CD8-positive, alpha-beta T cell (primary cell): ENCODE measurements at regions of chr12 and their contacts with region 1.

Region 1: DNA sequence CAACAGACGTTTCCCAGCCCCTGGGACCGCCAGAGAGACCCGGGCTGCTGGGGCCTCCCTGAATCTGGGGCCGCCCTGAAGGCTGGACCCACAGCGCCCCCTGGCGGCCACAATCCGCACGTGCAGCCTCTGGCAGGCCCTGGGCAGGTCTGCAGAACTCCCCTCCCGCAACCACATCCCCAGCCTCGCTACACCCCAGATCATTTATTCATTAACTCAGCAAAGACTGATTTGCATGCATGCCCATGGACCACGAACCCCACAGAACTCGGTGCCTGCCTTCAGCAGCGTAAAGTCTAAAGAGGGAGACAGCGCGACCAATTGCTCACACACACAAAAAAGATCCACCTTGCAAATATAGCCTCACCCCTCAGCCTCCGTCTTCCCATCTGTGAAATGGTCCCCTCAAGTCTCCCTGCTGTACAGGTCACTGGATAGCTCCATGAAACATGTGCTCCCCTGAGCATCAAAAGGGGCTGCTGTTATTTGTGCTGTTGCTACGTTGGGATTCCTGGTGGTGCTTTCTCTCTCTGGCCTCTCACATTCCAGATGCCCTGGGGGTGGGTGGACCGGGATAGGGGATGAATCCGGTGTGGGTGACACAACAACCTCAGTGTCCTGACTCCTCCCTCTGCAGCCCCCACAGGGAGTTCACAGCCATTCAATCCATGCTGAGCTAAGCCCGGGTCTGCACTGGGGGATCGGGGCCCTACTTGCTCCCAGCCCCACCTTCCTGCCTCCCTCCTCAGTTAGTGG is 96.4 kb downstream of the SCARB1 start:
- DNase-seq: peak; percentile 72 to 94 (median 83)
- ATAC-seq: peak; percentile 89
- H3K4me3 ChIP-seq: no peak overlapping the region
- H3K4me3 Mint-ChIP-seq: no peak overlapping the region
- H3K27ac ChIP-seq: no peak overlapping the region
- H3K27ac Mint-ChIP-seq: peak overlapping the region; percentile 24
- H3K4me1 ChIP-seq: peaks cover 8% of the 10 kb centered on the region
- H3K4me1 Mint-ChIP-seq: peaks cover 23% of the 10 kb centered on the region
- H3K27me3 ChIP-seq: peaks cover 1 to 3% of the 10 kb centered on the region in 2 experiments
- H3K27me3 Mint-ChIP-seq: peaks cover 4% of the 10 kb centered on the region
- CTCF ChIP-seq: peak; percentile 99

Region 2: GRCh38 chr12:124347716-124348357 is 419.4 kb before region 1 on chr12:
- CTCF ChIA-PET with region 1: interaction called, 20 read pairs
- POLR2A ChIA-PET with region 1: no interaction called
- intact Hi-C with region 1: loop called in 1 of 2 experiments (anchors 1 kb)
- DNase-seq: peak in 7 of 9 experiments; percentile 4 to 59 (median 40)
- ATAC-seq: no peak
- H3K4me3 ChIP-seq: no peak overlapping the region
- H3K4me3 Mint-ChIP-seq: no peak overlapping the region
- H3K27ac ChIP-seq: no peak overlapping the region
- H3K27ac Mint-ChIP-seq: no peak overlapping the region
- H3K4me1 ChIP-seq: no peaks in the 10 kb centered on the region
- H3K4me1 Mint-ChIP-seq: no peaks in the 10 kb centered on the region
- H3K27me3 ChIP-seq: no peaks in the 10 kb centered on the region
- H3K27me3 Mint-ChIP-seq: no peaks in the 10 kb centered on the region
- CTCF ChIP-seq: peak; percentile 58

Region 3: GRCh38 chr12:124379938-124380754 is 387.1 kb before region 1 on chr12:
- CTCF ChIA-PET with region 1: interaction called, 5 read pairs
- POLR2A ChIA-PET with region 1: no interaction called
- intact Hi-C with region 1: loop called in 1 of 2 experiments (anchors 10 kb)
- DNase-seq: no peak
- ATAC-seq: no peak
- H3K4me3 ChIP-seq: no peak overlapping the region
- H3K4me3 Mint-ChIP-seq: no peak overlapping the region
- H3K27ac ChIP-seq: no peak overlapping the region
- H3K27ac Mint-ChIP-seq: peak overlapping the region; percentile 41
- H3K4me1 ChIP-seq: no peaks in the 10 kb centered on the region
- H3K4me1 Mint-ChIP-seq: peaks cover 4% of the 10 kb centered on the region
- H3K27me3 ChIP-seq: no peaks in the 10 kb centered on the region
- H3K27me3 Mint-ChIP-seq: no peaks in the 10 kb centered on the region
- CTCF ChIP-seq: no peak

Region 4: GRCh38 chr12:124567661-124568373 is 199.4 kb before region 1 on chr12:
- CTCF ChIA-PET with region 1: no interaction called
- POLR2A ChIA-PET with region 1: no interaction called
- intact Hi-C with region 1: loop called in 1 of 2 experiments (anchors 5 kb)
- DNase-seq: peak; percentile 59 to 91 (median 79)
- ATAC-seq: peak; percentile 65
- H3K4me3 ChIP-seq: peak overlapping the region; percentile 66 to 84
- H3K4me3 Mint-ChIP-seq: peak overlapping the region; percentile 85
- H3K27ac ChIP-seq: peak overlapping the region; percentile 1 to 23
- H3K27ac Mint-ChIP-seq: peak overlapping the region; percentile 67
- H3K4me1 ChIP-seq: peaks cover 32% of the 10 kb centered on the region
- H3K4me1 Mint-ChIP-seq: peaks cover 28% of the 10 kb centered on the region
- H3K27me3 ChIP-seq: no peaks in the 10 kb centered on the region
- H3K27me3 Mint-ChIP-seq: no peaks in the 10 kb centered on the region
- CTCF ChIP-seq: no peak